ENCODE measurements at regions of chr5 and their contacts with region 1.

Region 1: GRCh38 chr5:37850226-37850865 is 10.5 kb upstream of the GDNF start:
- DNase-seq: no peak
- ATAC-seq: no peak
- H3K4me3 ChIP-seq: no peak overlapping the region
- H3K27ac ChIP-seq: no peak overlapping the region
- H3K4me1 ChIP-seq: peaks cover 19% of the 10 kb centered on the region
- H3K27me3 ChIP-seq: no peaks in the 10 kb centered on the region
- CTCF ChIP-seq: no peak

Region 2: DNA sequence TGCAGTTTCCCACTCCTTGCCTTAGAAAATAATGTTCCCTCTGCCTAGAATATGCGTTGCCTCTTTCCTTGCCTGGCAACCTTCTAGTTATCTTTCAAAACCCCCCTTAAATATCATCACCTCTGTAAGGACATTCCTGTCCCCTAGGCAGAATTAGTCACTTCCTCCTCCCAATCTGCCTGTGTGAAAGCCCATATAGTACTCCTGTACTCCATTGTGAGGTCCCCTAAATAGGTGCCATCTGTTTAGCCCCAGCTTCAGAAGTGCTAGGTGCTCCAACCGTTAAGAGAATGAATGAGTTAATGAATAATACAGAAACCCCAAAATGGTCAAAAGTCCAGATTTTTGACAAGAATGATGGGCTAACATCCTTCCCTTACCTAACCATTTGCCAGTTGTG is 191.9 kb before region 1 on chr5:
- intact Hi-C with region 1: no loop called
- DNase-seq: no peak
- ATAC-seq: peak in 1 of 4 donors; percentile 28
- H3K4me3 ChIP-seq: no peak overlapping the region
- H3K27ac ChIP-seq: no peak overlapping the region
- H3K4me1 ChIP-seq: no peaks in the 10 kb centered on the region
- H3K27me3 ChIP-seq: no peaks in the 10 kb centered on the region
- CTCF ChIP-seq: no peak

Region 3: GRCh38 chr5:37810311-37810710 is 40.0 kb before region 1 on chr5:
- intact Hi-C with region 1: no loop called
- DNase-seq: no peak
- ATAC-seq: no peak
- H3K4me3 ChIP-seq: no peak overlapping the region
- H3K27ac ChIP-seq: peak overlapping the region; percentile 70
- H3K4me1 ChIP-seq: no peaks in the 10 kb centered on the region
- H3K27me3 ChIP-seq: no peaks in the 10 kb centered on the region
- CTCF ChIP-seq: no peak

Region 4: DNA sequence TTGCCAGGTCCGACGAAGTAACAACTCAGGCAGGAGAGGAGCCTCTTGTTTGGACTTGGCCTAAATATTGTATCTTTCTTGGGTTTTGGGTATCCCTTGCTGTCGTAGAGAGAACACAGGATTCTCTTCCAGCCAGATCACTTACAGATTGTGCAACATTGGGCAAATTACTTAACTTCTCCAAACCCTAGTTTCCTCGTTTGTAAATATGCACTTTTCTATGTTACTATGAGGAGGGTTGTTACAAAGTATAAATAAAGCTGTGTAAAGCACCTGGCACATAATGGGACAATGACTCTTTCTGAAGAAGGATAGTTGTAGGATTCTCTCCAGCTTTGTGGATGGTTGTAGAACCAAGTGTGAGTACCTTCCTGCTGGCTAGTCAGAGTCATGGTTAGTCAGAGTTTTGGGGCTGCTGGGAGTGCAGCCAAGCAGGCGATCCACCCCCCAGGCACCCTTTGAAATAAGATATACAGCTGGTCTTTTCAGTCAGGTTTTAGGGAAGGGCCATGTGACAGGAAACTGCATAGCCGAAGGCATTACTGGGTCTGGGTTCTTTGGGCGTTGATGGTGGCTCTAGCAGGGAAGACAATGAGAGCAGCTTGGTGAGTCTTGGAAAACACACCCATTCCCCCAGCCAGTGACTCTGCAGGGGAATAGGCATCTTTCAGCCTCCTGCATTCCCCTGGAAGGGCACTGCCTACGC is 39.4 kb after region 1 on chr5:
- intact Hi-C with region 1: loop called in 1 of 2 experiments (anchors 5 kb)
- DNase-seq: no peak
- ATAC-seq: peak in 1 of 4 donors; percentile 26
- H3K4me3 ChIP-seq: no peak overlapping the region
- H3K27ac ChIP-seq: no peak overlapping the region
- H3K4me1 ChIP-seq: peaks cover 18% of the 10 kb centered on the region
- H3K27me3 ChIP-seq: no peaks in the 10 kb centered on the region
- CTCF ChIP-seq: no peak

Measured in psoas muscle (tissue), 8 donors.